ENCODE measurements at regions of chr17 and their contacts with region 1.

Region 1: GRCh38 chr17:32259586-32259985 is 6.0 kb upstream of the RHBDL3 start:
- DNase-seq: no peak
- H3K4me3 ChIP-seq: no peak overlapping the region
- H3K4me1 ChIP-seq: no peaks in the 10 kb centered on the region
- H3K27me3 ChIP-seq: peaks cover 34% of the 10 kb centered on the region

Region 2: GRCh38 chr17:32319548-32319905 is 59.9 kb after region 1 on chr17:
- in situ Hi-C with region 1: loop called (anchors 5 kb)
- DNase-seq: peak; percentile 68 to 91
- H3K4me3 ChIP-seq: no peak overlapping the region
- H3K4me1 ChIP-seq: peaks cover 5% of the 10 kb centered on the region; the same call in 1 of the 2 replicates
- H3K27me3 ChIP-seq: peaks cover 12% of the 10 kb centered on the region; the same call in 1 of the 2 replicates